ENCODE measurements at regions of chr3 and their contacts with region 1.

Region 1: DNA sequence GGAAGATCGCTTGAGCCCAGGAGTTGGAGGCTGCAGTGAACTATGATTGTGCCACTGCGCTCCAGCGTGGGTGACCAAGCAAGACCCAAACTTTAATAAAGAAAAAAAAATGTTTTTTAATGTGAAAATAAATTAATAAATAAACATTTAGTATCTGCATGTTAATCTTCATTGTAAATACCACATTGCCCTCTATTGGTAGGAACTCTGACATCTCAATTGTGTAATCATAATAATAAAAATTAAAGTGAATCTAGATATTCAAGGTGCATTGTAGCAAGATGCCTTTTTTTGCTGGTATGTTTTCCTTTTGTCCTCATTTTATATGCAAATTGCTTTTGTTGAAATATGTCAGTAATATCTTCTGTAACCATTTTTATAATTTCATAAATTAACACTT is 95.0 kb upstream of the LIMD1 start:
- DNase-seq: no peak
- ATAC-seq: no peak
- H3K4me3 ChIP-seq: no peak overlapping the region
- H3K27ac ChIP-seq: no peak overlapping the region
- H3K4me1 ChIP-seq: peaks cover 0 to 10% (median 0%) of the 10 kb centered on the region in 9 donors
- H3K27me3 ChIP-seq: no peaks in the 10 kb centered on the region
- CTCF ChIP-seq: peak in 8 of 9 donors; percentile 18 to 62 (median 54)

Region 2: DNA sequence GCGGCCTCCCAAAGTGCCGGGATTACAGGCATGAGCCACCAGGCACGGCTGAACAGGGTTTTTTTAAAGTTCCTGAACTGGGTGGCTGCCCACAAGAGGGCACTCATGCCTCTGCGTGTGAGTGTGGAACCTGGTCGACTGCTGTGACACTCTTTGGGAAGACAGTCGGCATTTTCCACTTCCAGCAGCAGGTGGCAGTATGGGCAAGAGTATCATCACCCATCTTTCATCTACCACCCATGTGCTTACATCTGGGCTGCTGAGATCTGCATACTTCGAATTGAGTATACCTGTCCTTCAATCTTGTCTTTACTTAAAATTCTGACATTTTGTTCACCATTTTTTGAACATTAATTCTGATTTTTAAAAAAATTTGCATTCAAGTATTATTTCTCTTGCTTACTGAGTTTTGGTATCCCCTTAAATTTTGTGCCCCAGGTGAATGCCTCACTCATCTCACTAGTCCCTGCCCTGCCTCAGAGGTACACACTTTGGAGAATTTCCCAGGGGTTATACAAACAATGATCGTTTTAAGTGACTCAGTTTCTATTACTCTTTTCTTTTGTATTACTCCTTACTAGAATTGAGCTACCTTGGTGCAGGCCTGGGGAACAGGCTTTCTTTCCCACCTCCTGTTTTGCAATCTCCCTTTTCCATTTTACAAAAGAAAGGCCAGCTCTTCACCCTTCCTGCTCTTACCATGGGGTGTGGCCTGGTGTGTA is 461.6 kb before region 1 on chr3:
- intact Hi-C with region 1: loop called in 9 of 10 experiments (anchors 2 to 10 kb)
- DNase-seq: peak; percentile 86 to 93
- ATAC-seq: peak; percentile 63 to 86 (median 82)
- H3K4me3 ChIP-seq: peak overlapping the region in 2 of 10 donors; percentile 24 to 26
- H3K27ac ChIP-seq: peak overlapping the region in 5 of 10 donors; percentile 25 to 62 (median 32)
- H3K4me1 ChIP-seq: peaks cover 3 to 62% (median 33%) of the 10 kb centered on the region in 9 donors
- H3K27me3 ChIP-seq: no peaks in the 10 kb centered on the region
- CTCF ChIP-seq: peak; percentile 80 to 94 (median 89)

Region 3: GRCh38 chr3:45043728-45044299 is 455.7 kb before region 1 on chr3:
- intact Hi-C with region 1: loop called in 9 of 10 experiments (anchors 2 to 10 kb)
- DNase-seq: no peak
- ATAC-seq: peak in 3 of 8 donors; percentile 18 to 51 (median 24)
- H3K4me3 ChIP-seq: no peak overlapping the region
- H3K27ac ChIP-seq: peak overlapping the region in 1 of 10 donors; percentile 79
- H3K4me1 ChIP-seq: peaks cover 0 to 44% (median 0%) of the 10 kb centered on the region in 9 donors
- H3K27me3 ChIP-seq: no peaks in the 10 kb centered on the region
- CTCF ChIP-seq: peak in 3 of 9 donors; percentile 13 to 34 (median 14)

Region 4: GRCh38 chr3:45055411-45056143 is 444.0 kb before region 1 on chr3:
- intact Hi-C with region 1: loop called in 1 of 10 experiments (anchors 10 kb)
- DNase-seq: no peak
- ATAC-seq: peak in 1 of 8 donors; percentile 60
- H3K4me3 ChIP-seq: no peak overlapping the region
- H3K27ac ChIP-seq: peak overlapping the region in 2 of 10 donors; percentile 47 to 72
- H3K4me1 ChIP-seq: peaks cover 0 to 60% (median 11%) of the 10 kb centered on the region in 9 donors
- H3K27me3 ChIP-seq: no peaks in the 10 kb centered on the region
- CTCF ChIP-seq: peak in 5 of 9 donors; percentile 11 to 40 (median 34)

Region 5: GRCh38 chr3:45210308-45211041 is 289.1 kb before region 1 on chr3:
- intact Hi-C with region 1: loop called in 1 of 10 experiments (anchors 10 kb)
- DNase-seq: peak; percentile 75 to 83
- ATAC-seq: peak; percentile 94 to 98 (median 96)
- H3K4me3 ChIP-seq: no peak overlapping the region
- H3K27ac ChIP-seq: no peak overlapping the region
- H3K4me1 ChIP-seq: peaks cover 0 to 9% (median 0%) of the 10 kb centered on the region in 9 donors
- H3K27me3 ChIP-seq: peaks cover 0 to 10% (median 5%) of the 10 kb centered on the region in 7 donors
- CTCF ChIP-seq: peak; percentile 37 to 80 (median 72)

Region 6: DNA sequence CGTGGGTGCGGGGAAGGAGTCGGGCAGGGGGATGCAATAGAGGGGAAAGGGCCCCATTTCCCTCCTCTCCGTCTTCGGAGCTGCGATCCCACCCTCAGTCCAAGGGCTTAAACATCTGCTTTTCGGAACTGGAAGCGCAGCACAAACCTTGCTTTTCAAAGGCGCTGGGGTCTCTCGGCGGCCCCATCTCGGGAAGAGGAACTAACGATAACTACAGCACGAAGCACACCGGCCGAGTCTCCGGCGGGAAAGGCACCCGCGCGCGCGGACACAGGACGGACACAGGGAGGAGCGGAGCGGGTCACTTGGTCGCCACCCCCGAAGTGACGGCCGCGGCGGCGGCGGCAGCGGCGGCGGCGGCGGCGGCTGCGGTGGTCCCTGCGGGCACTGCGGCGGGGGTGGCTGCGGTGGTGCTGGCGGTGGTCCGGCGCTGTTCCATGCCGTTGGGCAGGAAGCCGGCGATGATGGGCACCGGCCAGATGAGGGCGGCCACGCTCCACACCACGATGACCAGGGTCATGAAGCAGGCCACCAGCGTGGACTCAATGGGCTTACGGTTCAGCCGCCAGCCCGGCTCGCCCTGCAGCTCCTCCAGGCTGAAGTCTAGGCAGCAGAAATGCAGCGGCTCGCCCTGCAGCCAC is 274.6 kb before region 1 on chr3:
- intact Hi-C with region 1: loop called in 6 of 10 experiments (anchors 5 to 10 kb)
- DNase-seq: peak; percentile 63 to 75
- ATAC-seq: peak; percentile 73 to 87 (median 81)
- H3K4me3 ChIP-seq: peak overlapping the region in 9 of 10 donors; percentile 34 to 55 (median 48)
- H3K27ac ChIP-seq: peak overlapping the region in 1 of 10 donors; percentile 1
- H3K4me1 ChIP-seq: peaks cover 0 to 14% (median 8%) of the 10 kb centered on the region in 9 donors
- H3K27me3 ChIP-seq: peaks cover 0 to 84% (median 65%) of the 10 kb centered on the region in 7 donors
- CTCF ChIP-seq: peak; percentile 26 to 58 (median 54)